Naive thymus-derived CD4-positive, alpha-beta T cell (primary cell): ENCODE measurements at regions of chr14 and their contacts with region 1.

Region 1: DNA sequence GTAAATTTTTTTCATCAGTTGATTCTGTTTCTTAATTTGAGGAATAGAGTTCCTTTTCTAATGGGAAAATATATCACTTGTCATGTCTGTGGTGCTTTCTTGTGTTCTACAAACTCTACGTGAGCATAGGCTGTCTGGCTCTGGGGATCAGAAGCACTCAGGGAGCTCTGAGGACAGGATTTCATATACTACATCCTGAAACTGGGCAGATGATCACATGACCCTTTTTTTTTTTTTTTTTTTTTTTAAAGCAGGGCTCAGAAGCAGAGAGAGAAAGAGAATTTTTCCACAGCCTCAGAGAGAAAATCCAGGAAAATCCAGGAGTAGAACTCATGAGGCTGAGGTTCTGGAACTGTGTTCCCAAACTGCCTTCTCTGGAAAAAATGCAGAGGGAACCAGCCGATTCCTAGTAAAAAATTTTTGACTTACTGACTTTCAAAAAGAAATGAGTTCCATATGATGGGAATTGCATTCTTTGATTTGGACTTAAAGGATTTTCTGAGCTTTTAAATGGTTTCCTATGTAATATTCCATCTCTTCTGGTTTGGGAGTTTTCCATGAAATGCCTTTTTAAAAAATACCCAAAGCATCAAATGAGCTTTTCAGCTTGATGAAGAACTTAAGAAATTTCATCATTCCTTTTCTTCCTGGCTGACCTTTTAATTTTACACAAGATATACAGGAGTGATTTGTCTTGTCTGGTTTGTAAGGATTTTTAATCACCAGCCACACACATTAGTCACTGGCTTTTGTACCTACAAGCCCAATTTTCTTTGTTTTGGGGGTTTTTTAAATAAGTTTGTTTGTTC is 183.1 kb upstream of the HIF1A start:
- DNase-seq: no peak
- ATAC-seq: no peak
- H3K4me3 ChIP-seq: no peak overlapping the region
- H3K4me3 Mint-ChIP-seq: peak overlapping the region in 9 of 10 donors; percentile 37 to 74 (median 55)
- H3K27ac ChIP-seq: peak overlapping the region; percentile 52
- H3K27ac Mint-ChIP-seq: peak overlapping the region in 7 of 9 donors; percentile 68 to 95 (median 84)
- H3K4me1 ChIP-seq: peaks cover 37 to 46% of the 10 kb centered on the region in 2 donors
- H3K4me1 Mint-ChIP-seq: peaks cover 47 to 100% (median 95%) of the 10 kb centered on the region in 7 donors
- H3K27me3 ChIP-seq: no peaks in the 10 kb centered on the region
- H3K27me3 Mint-ChIP-seq: no peaks in the 10 kb centered on the region

Region 2: GRCh38 chr14:61493239-61493638 is 19.0 kb before region 1 on chr14:
- CTCF ChIA-PET with region 1: interaction called, 3 read pairs
- POLR2A ChIA-PET with region 1: interaction called, 3 read pairs
- intact Hi-C with region 1: loop called in 1 of 2 experiments (anchors 2 kb)
- DNase-seq: no peak
- ATAC-seq: no peak
- H3K4me3 ChIP-seq: no peak overlapping the region
- H3K4me3 Mint-ChIP-seq: no peak overlapping the region
- H3K27ac ChIP-seq: peak overlapping the region; percentile 39
- H3K27ac Mint-ChIP-seq: no peak overlapping the region
- H3K4me1 ChIP-seq: peaks cover 12 to 21% of the 10 kb centered on the region in 2 donors
- H3K4me1 Mint-ChIP-seq: peaks cover 7 to 39% (median 25%) of the 10 kb centered on the region in 7 donors
- H3K27me3 ChIP-seq: no peaks in the 10 kb centered on the region
- H3K27me3 Mint-ChIP-seq: no peaks in the 10 kb centered on the region

Region 3: DNA sequence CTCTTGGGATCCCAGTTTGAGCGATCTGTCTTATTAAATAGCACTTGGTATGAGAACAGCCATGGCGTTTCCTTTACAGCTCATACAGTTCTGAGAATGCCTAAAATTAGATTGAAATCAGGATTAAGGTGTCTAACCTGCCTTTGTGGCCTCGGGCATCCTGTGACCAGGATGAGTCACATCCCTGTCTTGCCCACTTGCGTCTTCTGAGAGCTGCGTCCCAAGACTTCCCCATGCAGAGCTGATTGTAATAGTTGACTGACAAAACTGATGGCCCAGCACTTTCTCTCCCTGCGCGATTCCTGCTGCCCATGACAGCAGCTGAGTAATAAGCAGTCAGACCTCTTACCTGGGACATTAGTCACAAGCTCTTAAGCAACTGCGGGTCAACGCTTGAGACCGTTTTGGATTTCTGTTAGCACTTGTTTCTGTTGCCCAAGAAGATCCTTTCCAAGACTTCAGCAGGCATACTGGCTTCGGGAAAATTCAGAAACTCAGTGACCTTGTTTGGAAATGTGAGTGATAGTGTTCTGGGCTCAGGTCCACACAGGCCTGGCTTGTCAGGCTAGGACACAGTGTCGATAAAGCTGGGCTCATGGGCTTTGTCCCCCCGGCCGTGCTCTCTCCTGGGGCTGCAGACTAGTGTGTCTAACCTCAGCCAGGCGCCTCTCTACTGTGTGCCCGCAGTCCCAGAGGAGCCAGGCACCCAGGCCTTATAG is 13.2 kb after region 1 on chr14:
- CTCF ChIA-PET with region 1: interaction called, 4 read pairs
- POLR2A ChIA-PET with region 1: interaction called, 4 read pairs
- intact Hi-C with region 1: loop called in 1 of 2 experiments (anchors 1 kb)
- DNase-seq: peak in 1 of 9 donors; percentile 69
- ATAC-seq: peak; percentile 74
- H3K4me3 ChIP-seq: no peak overlapping the region
- H3K4me3 Mint-ChIP-seq: peak overlapping the region in 3 of 10 donors; percentile 2 to 73 (median 63)
- H3K27ac ChIP-seq: peak overlapping the region; percentile 34
- H3K27ac Mint-ChIP-seq: peak overlapping the region; percentile 69 to 90 (median 81)
- H3K4me1 ChIP-seq: peaks cover 22 to 68% of the 10 kb centered on the region in 2 donors
- H3K4me1 Mint-ChIP-seq: peaks cover 43 to 86% (median 73%) of the 10 kb centered on the region in 7 donors
- H3K27me3 ChIP-seq: no peaks in the 10 kb centered on the region
- H3K27me3 Mint-ChIP-seq: no peaks in the 10 kb centered on the region